WTC11 (cell line): ENCODE measurements at regions of chr6 and their contacts with region 1.

Region 1: DNA sequence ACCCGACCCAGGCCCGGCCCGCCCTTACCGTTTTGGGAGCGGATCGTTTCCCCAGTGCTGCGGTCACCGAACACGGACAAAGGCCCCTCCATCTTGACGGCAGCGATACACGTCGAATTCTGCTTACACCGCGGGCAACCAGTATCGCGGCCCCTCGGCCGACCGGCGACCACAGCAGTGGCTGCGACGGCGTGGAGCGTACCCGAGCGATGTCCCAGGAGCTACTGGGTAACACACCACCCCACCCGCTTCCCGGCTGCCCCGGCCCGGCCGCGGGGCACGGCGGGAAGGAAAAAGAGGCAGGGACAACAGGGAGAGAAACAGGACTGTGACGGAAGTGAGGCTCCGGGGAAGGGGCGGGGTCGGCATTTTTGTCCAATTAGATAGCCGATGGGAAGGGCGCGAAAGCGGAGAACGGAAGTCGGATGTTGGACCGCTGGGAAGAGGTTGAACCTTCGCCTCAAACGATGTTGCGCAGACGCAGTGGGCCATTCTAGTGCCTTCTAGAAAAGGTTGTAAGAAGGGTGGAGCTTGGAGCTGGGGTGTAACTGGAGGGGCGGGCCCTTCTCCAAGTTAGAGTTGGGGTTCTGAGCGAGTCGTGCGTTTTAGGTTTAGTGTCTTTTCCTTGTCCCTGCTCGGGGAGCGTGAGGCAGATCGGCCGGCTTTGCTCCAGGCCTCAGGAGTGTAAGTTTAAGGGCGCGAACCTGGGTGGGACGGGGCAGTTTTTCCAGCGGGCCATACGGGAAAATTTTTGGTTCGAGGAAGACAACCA is at the start of gene TCP1:
- DNase-seq: peak; percentile 99
- ATAC-seq: peak; percentile 87
- H3K4me3 Mint-ChIP-seq: peak within 1 kb of the TSS; percentile 99
- H3K27ac Mint-ChIP-seq: peak within 1 kb of the TSS; percentile 99
- H3K4me1 Mint-ChIP-seq: peaks cover 42% of the 10 kb centered on the region
- H3K27me3 Mint-ChIP-seq: no peaks in the 10 kb centered on the region
- CTCF ChIP-seq: no peak
- total RNA-seq, gene TCP1: 293 to 388 TPM (median 301 TPM) in 3 replicates

Region 2: DNA sequence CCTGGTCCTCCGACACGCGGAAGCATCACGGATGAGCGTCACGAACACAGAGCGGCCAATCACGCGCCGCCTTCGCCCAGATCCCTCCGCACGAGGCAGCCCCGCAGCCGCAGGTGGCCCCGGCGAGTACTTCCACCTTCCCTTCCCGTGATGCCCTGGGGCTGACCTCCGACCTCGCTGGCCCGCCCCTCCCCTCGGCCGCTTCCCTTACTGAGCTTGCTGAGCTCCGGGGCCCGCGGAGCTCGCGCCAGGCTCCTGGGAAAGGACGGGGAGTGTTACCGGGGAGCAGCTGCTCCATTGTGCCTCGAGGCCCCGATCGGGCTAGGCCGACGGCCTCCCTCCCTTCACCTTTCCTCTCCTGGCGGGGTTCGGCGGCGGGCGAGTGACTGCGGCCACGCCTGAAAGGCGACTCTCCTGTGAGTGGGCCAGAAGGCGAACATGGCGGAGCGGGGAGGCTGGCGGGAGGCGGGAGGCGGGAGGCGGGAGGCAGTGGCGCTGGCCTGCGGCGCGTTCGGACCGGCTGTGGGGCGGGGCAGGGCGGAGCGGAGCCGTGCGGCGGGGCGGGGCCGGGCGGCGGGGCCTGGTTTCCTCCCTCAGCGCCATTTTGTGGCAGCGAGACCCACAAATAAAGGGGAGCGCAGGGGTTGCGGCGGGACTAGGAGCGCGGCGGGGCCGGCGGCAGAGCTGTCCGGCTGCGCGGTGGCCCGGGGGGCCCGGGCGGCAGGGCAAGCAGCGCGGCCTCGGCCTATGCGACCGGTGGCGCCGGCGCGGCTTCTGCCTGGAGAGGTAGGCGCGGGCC is 62.4 kb before region 1 on chr6 and contains the start of gene WTAP:
- CTCF ChIA-PET with region 1: no interaction called
- POLR2A ChIA-PET with region 1: interaction called, 32 read pairs
- DNase-seq: peak; percentile 97
- ATAC-seq: peak; percentile 86
- H3K4me3 Mint-ChIP-seq: peak within 1 kb of the TSS; percentile 93
- H3K27ac Mint-ChIP-seq: peak within 1 kb of the TSS; percentile 98
- H3K4me1 Mint-ChIP-seq: peaks cover 29% of the 10 kb centered on the region
- H3K27me3 Mint-ChIP-seq: no peaks in the 10 kb centered on the region
- CTCF ChIP-seq: no peak
- total RNA-seq, gene WTAP: 88.8 to 92.7 TPM (median 91.9 TPM) in 3 replicates

Region 3: DNA sequence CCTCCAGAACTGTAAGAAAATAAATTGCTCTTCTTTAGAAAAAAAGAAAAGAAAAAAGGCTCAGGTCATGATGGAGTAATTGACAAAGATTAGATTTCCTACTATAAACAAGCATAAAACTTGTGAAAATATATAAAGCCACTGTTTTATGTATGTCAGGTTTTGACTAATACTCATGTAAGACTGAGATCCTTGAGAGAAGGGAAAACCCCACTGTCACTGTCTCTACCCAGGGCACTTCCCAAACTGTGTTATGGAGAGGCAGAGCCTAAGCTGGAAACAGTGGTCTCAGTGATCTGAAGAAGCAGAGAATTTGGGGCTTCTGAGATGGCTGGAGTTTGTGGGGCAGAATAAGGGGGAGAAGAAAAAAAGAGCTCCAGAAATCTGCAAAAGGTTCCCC is 20.1 kb before region 1 on chr6:
- CTCF ChIA-PET with region 1: no interaction called
- POLR2A ChIA-PET with region 1: no interaction called
- DNase-seq: no peak
- ATAC-seq: no peak
- H3K4me3 Mint-ChIP-seq: no peak overlapping the region
- H3K27ac Mint-ChIP-seq: no peak overlapping the region
- H3K4me1 Mint-ChIP-seq: 0 out of 2 replicates have a peak, but pooled peaks cover 2% of the 10 kb centered on the region
- H3K27me3 Mint-ChIP-seq: no peaks in the 10 kb centered on the region
- CTCF ChIP-seq: no peak

Region 4: DNA sequence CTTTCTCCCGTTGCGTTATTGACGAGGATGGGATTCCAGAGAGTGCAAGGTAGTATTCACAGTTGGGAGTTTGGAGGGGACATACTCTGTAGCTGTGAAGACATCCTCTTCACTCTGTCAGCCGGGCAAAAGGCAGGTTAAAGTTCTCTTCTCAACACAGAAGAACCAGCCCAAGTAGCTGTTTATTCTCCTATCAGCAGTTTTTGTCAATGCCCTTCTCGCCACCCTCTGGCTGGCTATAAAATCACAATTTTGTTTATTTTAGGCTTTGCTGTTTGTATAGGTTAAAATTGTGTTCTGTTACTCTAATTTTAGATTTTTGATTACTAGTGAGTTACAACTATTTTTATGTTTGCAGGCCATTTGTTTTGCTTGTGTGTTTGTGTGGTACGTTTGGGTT is 63.3 kb after region 1 on chr6:
- CTCF ChIA-PET with region 1: interaction called, 18 read pairs
- POLR2A ChIA-PET with region 1: interaction called, 10 read pairs
- DNase-seq: no peak
- ATAC-seq: peak; percentile 74
- H3K4me3 Mint-ChIP-seq: no peak overlapping the region
- H3K27ac Mint-ChIP-seq: peak overlapping the region; percentile 64; the same call in 1 of the 2 replicates
- H3K4me1 Mint-ChIP-seq: peaks cover 6% of the 10 kb centered on the region; the same call in 1 of the 2 replicates
- H3K27me3 Mint-ChIP-seq: peaks cover 5% of the 10 kb centered on the region
- CTCF ChIP-seq: no peak

Region 5: GRCh38 chr6:159862103-159862502 is 72.5 kb after region 1 on chr6:
- CTCF ChIA-PET with region 1: interaction called, 11 read pairs
- POLR2A ChIA-PET with region 1: no interaction called
- DNase-seq: no peak
- ATAC-seq: no peak
- H3K4me3 Mint-ChIP-seq: no peak overlapping the region
- H3K27ac Mint-ChIP-seq: no peak overlapping the region
- H3K4me1 Mint-ChIP-seq: no peaks in the 10 kb centered on the region
- H3K27me3 Mint-ChIP-seq: no peaks in the 10 kb centered on the region
- CTCF ChIP-seq: no peak